ENCODE measurements at regions of chr14 and their contacts with region 1.

Region 1: GRCh38 chr14:68939893-68940613 is 39.0 kb downstream of the ACTN1 start:
- DNase-seq: no peak
- ATAC-seq: peak; percentile 59
- H3K4me3 Mint-ChIP-seq: peak overlapping the region; percentile 72
- H3K27ac Mint-ChIP-seq: no peak overlapping the region
- H3K4me1 Mint-ChIP-seq: peaks cover 33% of the 10 kb centered on the region
- H3K27me3 Mint-ChIP-seq: no peaks in the 10 kb centered on the region

Region 2: DNA sequence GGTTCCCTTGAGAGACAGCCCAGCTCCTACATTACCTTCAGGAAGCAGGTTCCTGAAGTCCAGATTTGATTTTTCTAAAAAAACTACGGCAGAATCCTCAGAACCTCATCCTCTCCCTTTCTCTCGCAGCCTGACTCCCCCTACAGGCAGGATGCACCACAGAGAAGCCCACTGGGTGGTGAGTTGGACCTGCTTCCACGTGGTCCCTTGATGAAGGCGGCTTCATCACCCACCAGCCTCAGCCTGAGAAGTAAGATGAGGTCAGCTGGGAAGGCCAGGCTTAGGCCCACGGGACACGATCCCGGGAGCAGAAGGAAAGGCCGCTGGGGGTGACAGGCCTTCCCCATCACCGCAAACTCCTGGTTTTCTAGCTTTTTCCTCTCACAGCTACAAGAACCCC is 43.9 kb before region 1 on chr14:
- POLR2A ChIA-PET with region 1: no interaction called
- DNase-seq: no peak
- ATAC-seq: no peak
- H3K4me3 Mint-ChIP-seq: no peak overlapping the region
- H3K27ac Mint-ChIP-seq: no peak overlapping the region
- H3K4me1 Mint-ChIP-seq: peaks cover 24% of the 10 kb centered on the region
- H3K27me3 Mint-ChIP-seq: no peaks in the 10 kb centered on the region

Region 3: DNA sequence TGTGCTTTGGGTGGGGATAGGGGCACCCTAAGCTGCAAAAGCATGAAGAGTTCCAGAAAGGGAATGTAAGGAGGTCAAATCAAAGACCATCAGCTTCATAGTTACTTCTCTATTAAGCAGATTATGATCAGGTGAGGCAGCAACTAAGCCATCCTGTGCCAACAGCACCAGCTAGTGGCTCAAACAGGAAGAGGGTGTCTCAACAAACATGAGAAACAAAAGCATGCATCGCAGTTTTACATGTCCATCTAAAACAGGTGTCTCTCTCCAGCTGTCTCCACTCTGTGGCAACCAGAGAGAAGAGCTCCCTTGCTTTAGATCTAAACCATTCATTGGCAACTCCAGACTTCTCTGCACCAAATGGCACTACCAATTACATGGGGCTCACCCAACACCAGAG is 13.8 kb before region 1 on chr14:
- POLR2A ChIA-PET with region 1: interaction called, 13 read pairs
- DNase-seq: no peak
- ATAC-seq: no peak
- H3K4me3 Mint-ChIP-seq: no peak overlapping the region
- H3K27ac Mint-ChIP-seq: peak overlapping the region; percentile 43
- H3K4me1 Mint-ChIP-seq: peaks cover 44% of the 10 kb centered on the region
- H3K27me3 Mint-ChIP-seq: no peaks in the 10 kb centered on the region

Region 4: GRCh38 chr14:69055999-69056788 is 116.1 kb after region 1 on chr14:
- POLR2A ChIA-PET with region 1: no interaction called
- DNase-seq: no peak
- ATAC-seq: peak; percentile 31
- H3K4me3 Mint-ChIP-seq: no peak overlapping the region
- H3K27ac Mint-ChIP-seq: no peak overlapping the region
- H3K4me1 Mint-ChIP-seq: peaks cover 20% of the 10 kb centered on the region
- H3K27me3 Mint-ChIP-seq: no peaks in the 10 kb centered on the region

Measured in activated naive CD8-positive, alpha-beta T cell treated with anti-CD3 and anti-CD28 coated beads, Interleukin-2, amount 10 ng/mL, durations not matched to agents 7 days and 5 days (primary cell).